ENCODE measurements at regions of chr19 and their contacts with region 1.

Region 1: GRCh38 chr19:35748106-35749020 is at the start of gene LIN37:
- DNase-seq: peak; percentile 100
- H3K4me3 Mint-ChIP-seq: peak within 1 kb of the TSS; percentile 98
- H3K27ac Mint-ChIP-seq: peak within 1 kb of the TSS; percentile 92
- H3K4me1 Mint-ChIP-seq: peaks cover 44% of the 10 kb centered on the region
- H3K27me3 Mint-ChIP-seq: no peaks in the 10 kb centered on the region
- total RNA-seq, gene LIN37: 5.7 to 9.7 TPM

Region 2: DNA sequence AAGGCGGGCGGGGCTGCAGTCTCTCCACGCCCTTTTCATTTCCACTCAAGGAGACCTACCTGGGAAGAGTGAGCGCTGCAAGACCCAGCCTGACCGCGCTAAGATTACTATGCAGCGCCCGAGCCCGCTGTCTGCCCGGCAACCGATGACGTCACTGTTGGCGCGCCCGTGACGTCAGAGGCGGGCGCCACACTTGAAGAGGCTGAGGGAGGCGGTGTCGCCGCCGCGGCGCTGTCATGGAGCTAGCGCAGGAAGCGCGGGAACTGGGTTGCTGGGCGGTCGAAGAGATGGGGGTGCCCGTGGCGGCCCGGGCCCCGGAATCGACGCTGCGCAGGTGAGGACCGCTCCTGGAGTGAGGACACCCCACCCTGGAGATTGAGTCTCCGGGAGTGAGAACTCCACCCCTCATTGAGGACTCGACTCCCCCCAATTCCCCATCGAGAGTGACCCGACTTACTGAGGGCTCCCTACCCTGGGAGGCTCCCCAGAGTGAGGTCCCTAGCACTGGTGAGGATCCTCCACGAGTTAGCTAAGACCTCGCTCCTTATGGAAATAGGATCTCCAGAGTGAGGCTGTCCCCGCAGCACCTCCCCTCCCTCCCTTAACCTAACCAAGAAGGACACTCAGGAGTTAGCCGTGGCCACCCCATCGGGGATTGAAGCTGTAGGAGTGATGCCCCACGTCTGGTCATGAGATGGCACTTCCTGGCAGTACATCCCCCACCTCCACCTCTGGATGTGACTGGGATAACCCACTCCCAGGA is 135.6 kb before region 1 on chr19 and contains the start of gene HAUS5:
- CTCF ChIA-PET with region 1: no interaction called
- intact Hi-C with region 1: loop called (anchors 1 kb)
- DNase-seq: peak; percentile 96
- H3K4me3 Mint-ChIP-seq: peak within 1 kb of the TSS; percentile 86
- H3K27ac Mint-ChIP-seq: peak within 1 kb of the TSS; percentile 87
- H3K4me1 Mint-ChIP-seq: peaks cover 26% of the 10 kb centered on the region
- H3K27me3 Mint-ChIP-seq: no peaks in the 10 kb centered on the region
- total RNA-seq, gene HAUS5: 40.4 to 42.5 TPM

Region 3: GRCh38 chr19:35628565-35629331 is 119.6 kb before region 1 on chr19 and contains the start of gene RBM42:
- CTCF ChIA-PET with region 1: no interaction called
- intact Hi-C with region 1: loop called (anchors 1 kb)
- DNase-seq: peak; percentile 97
- H3K4me3 Mint-ChIP-seq: peak within 1 kb of the TSS; percentile 100
- H3K27ac Mint-ChIP-seq: peak within 1 kb of the TSS; percentile 95
- H3K4me1 Mint-ChIP-seq: peaks cover 19% of the 10 kb centered on the region
- H3K27me3 Mint-ChIP-seq: no peaks in the 10 kb centered on the region
- total RNA-seq, gene RBM42: 64.2 to 66.2 TPM

Region 4: DNA sequence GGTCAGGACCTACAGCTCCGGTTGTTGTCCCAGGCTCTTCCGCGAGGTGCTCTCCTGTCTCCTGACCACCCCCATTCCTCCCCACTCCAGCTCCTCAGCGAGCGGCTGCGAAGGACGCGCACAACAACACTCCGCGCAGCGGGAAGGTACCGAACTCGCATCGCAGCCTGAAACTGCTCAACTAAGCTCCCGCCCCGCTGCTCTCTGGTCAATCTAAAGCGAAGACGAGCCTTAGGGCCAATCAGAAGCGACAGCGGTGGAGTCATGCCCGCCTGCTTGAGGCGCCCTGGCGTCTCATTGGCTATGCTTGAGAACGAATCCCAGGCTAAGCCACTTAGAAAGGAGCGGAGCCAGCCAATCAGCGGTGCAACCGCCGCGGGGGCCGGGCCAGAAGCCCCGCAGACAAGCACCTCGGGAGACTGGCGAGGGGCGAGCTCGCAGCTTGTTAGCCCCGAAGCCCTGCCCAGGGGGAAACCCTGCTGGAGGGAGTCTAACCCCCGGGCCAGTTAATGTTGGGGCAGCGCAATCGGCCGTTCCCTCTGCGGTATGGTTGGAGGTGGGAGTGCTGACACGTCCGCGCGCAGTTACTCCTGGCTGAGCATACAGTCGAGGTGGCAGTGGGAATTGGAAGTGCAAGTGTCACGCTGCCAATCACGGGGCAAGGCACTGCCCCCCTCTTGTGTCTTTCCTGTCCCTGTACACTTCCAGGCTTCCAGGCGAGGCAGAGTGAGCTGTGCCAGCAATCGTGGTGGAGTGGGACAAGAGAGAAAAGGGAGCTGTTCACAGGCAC is 45.9 kb before region 1 on chr19:
- CTCF ChIA-PET with region 1: no interaction called
- intact Hi-C with region 1: loop called (anchors 2 kb)
- DNase-seq: peak; percentile 98
- H3K4me3 Mint-ChIP-seq: peak overlapping the region; percentile 92
- H3K27ac Mint-ChIP-seq: peak overlapping the region; percentile 95
- H3K4me1 Mint-ChIP-seq: peaks cover 10% of the 10 kb centered on the region
- H3K27me3 Mint-ChIP-seq: no peaks in the 10 kb centered on the region

Region 5: DNA sequence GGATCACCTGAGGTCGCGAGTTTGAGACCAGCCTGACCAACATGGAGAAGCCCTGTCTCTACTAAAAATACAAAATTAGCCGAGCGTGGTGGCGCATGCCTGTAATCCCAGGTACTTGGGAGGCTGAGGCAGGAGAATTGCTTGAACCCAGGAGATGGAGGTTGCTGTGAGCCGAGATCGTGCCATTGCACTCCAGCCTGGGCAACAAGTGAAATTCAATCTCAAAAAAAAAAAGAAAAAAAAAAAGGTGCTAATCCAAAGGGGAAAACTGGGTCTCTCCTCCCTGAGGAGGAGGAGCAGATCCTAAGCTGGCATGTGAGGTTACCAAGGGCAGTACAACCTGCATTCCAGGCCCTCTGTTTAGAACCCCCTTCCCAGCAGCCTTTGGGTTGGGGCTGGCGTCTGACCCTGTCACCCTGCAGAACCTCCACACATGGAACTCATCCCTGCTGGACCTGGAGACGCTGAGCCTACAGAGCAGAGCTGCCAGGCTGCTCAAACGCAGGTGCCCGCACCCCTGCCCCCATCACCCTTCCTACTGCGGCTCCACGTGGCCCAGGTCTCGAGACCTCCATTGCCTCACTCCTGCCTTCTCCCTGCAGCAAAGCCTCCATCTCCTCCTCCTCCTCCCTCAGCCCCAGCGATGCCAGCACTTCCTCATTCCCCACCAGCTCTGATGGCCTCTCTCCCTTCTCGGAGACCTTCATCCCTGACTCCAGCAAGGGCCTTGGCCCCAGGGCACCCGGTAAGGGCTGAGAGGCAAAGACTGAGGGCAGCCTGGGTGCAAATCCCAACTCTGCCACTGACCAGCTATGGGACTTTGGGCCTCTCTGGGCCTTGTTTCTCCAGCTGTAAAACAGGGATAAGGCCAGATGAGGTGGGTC is 16.3 kb after region 1 on chr19:
- CTCF ChIA-PET with region 1: no interaction called
- intact Hi-C with region 1: no loop called
- DNase-seq: no peak
- H3K4me3 Mint-ChIP-seq: no peak overlapping the region
- H3K27ac Mint-ChIP-seq: no peak overlapping the region
- H3K4me1 Mint-ChIP-seq: peaks cover 1% of the 10 kb centered on the region
- H3K27me3 Mint-ChIP-seq: no peaks in the 10 kb centered on the region

Region 6: GRCh38 chr19:35775298-35776110 is 27.1 kb after region 1 on chr19 and contains the start of gene ARHGAP33:
- CTCF ChIA-PET with region 1: interaction called, 3 read pairs
- intact Hi-C with region 1: loop called (anchors 1 kb)
- DNase-seq: peak; percentile 100
- H3K4me3 Mint-ChIP-seq: peak within 1 kb of the TSS; percentile 78
- H3K27ac Mint-ChIP-seq: no peak within 1 kb of the TSS
- H3K4me1 Mint-ChIP-seq: peaks cover 18% of the 10 kb centered on the region
- H3K27me3 Mint-ChIP-seq: no peaks in the 10 kb centered on the region
- total RNA-seq, gene ARHGAP33: 49.5 to 61.6 TPM

Region 7: DNA sequence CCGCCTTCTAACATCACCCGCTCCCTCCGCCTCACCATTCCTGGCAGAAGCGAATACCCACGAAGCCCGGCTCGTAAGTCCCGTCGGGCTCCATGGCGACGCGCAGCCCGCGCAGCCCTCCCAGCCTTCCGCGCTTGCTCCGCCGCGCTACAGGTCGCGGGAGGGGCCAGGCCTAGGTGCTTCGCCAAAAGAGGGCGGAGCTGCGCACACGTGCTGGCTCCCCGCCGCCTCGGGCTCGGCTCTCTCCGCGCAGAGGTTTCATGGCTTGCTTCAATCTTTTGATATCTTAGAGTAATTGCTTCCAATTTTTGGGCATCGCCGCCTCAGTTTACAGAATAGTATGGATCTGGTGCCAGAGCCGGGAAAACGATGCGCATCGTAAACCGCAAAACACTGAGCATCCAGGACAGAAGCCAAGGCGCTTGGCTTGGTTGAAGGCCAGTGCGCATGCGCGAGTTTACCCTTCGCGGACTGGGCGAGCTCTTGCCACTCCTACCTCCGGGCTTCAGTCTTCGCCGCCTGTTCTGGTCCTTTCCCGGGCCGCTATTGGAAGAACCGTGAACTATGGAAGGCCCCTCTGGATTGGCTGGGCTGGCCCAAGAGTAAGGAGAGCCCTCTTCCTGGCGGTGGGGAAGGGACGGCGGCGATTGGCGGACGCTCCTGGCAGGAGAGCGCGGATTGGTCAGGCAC is 366.5 kb after region 1 on chr19 and contains the start of gene POLR2I:
- CTCF ChIA-PET with region 1: no interaction called
- intact Hi-C with region 1: loop called (anchors 1 kb)
- DNase-seq: peak; percentile 99
- H3K4me3 Mint-ChIP-seq: peak within 1 kb of the TSS; percentile 99
- H3K27ac Mint-ChIP-seq: peak within 1 kb of the TSS; percentile 91
- H3K4me1 Mint-ChIP-seq: peaks cover 31% of the 10 kb centered on the region
- H3K27me3 Mint-ChIP-seq: no peaks in the 10 kb centered on the region
- total RNA-seq, gene POLR2I: 86.8 to 87.4 TPM